Activated CD4-positive, alpha-beta memory T cell treated with anti-CD3 and anti-CD28 coated beads for 36 hours (primary cell): ENCODE measurements at regions of chr19 and their contacts with region 1.

Region 1: DNA sequence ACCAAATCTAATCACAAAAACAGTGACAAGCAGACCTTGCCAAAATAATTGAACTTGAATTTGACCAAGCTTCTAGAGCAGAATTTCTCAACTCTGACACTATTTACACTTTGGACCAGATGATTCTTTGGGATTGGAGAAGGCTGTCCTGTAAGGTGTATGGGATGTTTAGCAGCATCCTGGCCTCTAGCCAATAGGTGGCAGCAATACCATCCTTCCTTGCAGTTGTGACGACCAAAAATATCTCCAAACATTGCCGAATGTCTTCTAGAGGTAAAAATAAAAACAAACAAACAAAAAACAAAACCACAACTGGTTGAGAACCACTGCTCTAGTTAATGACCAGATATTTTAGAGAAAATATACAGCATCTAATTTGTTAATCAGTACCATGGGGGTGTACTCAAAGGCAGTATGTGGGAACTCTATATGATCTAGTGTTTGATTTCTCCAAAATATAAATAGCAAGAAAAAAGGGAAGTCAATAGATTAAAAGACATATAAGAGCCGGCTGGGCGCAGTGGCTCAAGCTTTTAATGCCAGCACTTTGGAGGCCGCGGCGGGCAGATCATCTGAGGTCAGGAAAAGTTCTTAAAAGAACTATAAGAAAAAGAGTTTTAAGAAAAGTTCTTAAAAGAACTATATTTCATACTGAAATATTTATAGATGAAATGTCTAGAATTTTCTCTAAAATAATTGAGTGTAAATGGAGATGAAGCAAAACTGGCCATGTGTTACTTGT is 60.9 kb upstream of the ZNF527 start:
- DNase-seq: peak; percentile 39
- H3K4me3 Mint-ChIP-seq: no peak overlapping the region
- H3K27ac Mint-ChIP-seq: no peak overlapping the region
- H3K4me1 Mint-ChIP-seq: peaks cover 19% of the 10 kb centered on the region
- H3K27me3 Mint-ChIP-seq: peaks cover 2% of the 10 kb centered on the region

Region 2: GRCh38 chr19:37334179-37335071 is 24.4 kb after region 1 on chr19:
- CTCF ChIA-PET with region 1: no interaction called
- POLR2A ChIA-PET with region 1: no interaction called
- intact Hi-C with region 1: no loop called
- DNase-seq: peak; percentile 92
- H3K4me3 Mint-ChIP-seq: peak overlapping the region; percentile 88
- H3K27ac Mint-ChIP-seq: peak overlapping the region; percentile 78
- H3K4me1 Mint-ChIP-seq: peaks cover 23% of the 10 kb centered on the region
- H3K27me3 Mint-ChIP-seq: no peaks in the 10 kb centered on the region

Region 3: GRCh38 chr19:37551129-37551993 is 241.4 kb after region 1 on chr19:
- CTCF ChIA-PET with region 1: interaction called, 4 read pairs
- POLR2A ChIA-PET with region 1: no interaction called
- intact Hi-C with region 1: loop called (anchors 10 kb)
- DNase-seq: peak; percentile 78
- H3K4me3 Mint-ChIP-seq: peak overlapping the region; percentile 81
- H3K27ac Mint-ChIP-seq: peak overlapping the region; percentile 62
- H3K4me1 Mint-ChIP-seq: peaks cover 2% of the 10 kb centered on the region
- H3K27me3 Mint-ChIP-seq: no peaks in the 10 kb centered on the region